HEK293 (cell line): ENCODE measurements at regions of chr17 and their contacts with region 1.

Region 1: DNA sequence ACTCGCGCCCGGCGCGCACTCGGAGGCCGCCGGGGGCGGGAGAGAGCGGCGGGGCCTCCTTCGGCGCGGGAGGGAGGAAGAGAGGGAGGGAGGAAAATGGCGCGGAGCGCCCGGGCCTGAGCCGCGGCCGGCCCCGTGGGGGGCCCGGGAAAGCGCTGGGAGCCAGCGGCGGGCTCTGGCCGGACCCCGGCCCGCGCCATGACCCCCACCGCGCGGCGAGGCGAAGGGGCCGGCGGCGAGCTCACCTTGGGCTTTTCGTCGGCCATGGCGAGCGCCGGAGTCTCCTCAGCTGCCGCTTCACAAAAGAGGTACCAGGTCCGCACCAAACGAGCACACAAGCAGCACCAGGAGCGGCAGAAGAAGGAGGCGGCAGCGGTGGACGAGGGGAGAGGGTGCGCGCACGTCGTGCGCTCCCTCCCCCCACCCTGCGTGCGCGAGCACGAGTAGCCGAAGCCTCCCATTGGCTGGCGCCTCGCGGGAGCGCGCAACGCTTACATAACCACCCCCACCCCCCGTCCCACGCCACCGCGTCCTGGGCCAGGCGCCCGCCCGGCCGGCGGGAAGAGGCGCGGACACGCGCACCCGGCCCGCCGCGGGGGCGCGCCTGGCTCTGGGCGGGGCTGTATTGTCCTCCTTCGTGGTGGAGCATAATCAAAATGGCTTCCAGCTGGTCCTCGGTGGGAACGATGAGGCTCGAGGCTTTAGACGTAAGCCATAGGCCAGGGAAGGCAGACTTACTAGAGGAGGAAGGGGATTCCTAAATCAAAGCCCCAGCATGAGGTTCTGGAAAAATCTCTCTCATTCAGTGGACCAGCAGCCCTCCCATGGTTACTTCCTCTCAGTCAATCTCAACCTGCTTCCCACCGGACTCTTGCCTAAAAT is at the start of gene SUMO2:
- H3K4me3 ChIP-seq: peak within 1 kb of the TSS; percentile 56
- H3K27ac ChIP-seq: peak within 1 kb of the TSS; percentile 95
- H3K4me1 ChIP-seq: peaks cover 5% of the 10 kb centered on the region; the same call in 1 of the 2 replicates
- CTCF ChIP-seq: no peak

Region 2: DNA sequence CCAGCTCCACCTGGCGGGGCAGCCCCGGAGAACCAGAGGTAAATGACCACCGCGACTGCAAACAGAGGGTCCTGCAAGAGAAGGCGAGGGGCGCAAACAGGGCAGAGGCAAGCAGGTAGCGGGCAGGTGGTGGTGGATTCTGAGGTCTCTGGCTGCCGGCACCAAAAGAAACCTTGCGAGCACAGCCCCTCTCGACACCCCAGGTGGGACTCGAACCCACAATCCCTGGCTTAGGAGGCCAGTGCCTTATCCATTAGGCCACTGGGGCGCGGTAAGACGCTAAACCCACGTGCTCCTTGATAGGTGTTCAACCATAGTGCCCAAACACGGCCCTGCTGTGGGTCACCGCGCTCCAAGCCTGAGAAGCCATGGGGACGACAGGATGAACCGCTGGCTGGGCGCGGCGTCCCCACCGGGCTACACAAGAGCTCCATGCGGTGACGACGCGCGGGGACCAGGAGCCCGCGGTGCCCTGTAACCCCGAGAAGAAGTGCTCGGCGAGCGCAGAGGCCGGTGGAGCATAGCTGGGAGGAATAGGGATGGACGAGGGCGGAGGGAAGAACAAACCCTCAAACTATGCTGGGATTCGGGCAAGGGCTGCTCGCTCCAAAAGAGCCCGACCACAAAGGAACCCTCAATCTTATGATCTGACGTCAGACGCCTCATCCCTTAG is 148.4 kb before region 1 on chr17:
- CTCF ChIA-PET with region 1: no interaction called
- POLR2A ChIA-PET with region 1: no interaction called
- H3K4me3 ChIP-seq: peak overlapping the region; percentile 60
- H3K27ac ChIP-seq: peak overlapping the region; percentile 94
- H3K4me1 ChIP-seq: peaks cover 19% of the 10 kb centered on the region
- CTCF ChIP-seq: peak; percentile 51

Region 3: GRCh38 chr17:75154195-75155106 is 28.4 kb before region 1 on chr17 and contains the start of gene JPT1:
- CTCF ChIA-PET with region 1: interaction called, 4 read pairs
- POLR2A ChIA-PET with region 1: interaction called, 14 read pairs
- H3K4me3 ChIP-seq: peak within 1 kb of the TSS; percentile 90
- H3K27ac ChIP-seq: peak within 1 kb of the TSS; percentile 92
- H3K4me1 ChIP-seq: peaks cover 9% of the 10 kb centered on the region; the same call in 1 of the 2 replicates
- CTCF ChIP-seq: peak; percentile 11; the same call in 1 of the 2 replicates

Region 4: DNA sequence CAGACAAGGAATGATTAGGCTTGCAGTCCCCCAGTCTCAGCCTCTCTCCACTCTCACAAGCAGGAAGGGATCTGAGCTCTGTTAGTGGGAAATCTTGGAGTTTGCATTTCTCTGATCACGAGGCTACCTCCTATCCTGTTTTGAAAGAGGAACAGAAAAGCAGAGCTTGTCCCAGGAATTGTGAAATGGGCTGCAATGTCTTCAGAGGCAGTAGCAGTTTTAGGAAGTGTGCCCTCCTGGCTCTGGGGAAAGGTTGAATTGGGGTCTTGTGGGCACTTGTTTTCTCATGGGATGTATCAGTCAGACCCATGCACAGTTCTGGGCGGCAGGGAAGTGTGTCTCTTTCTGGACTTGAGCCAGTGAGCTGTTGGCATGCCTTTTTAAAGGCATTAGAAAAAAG is 45.5 kb after region 1 on chr17:
- CTCF ChIA-PET with region 1: no interaction called
- POLR2A ChIA-PET with region 1: no interaction called
- H3K4me3 ChIP-seq: no peak overlapping the region
- H3K27ac ChIP-seq: no peak overlapping the region
- H3K4me1 ChIP-seq: no peaks in the 10 kb centered on the region
- CTCF ChIP-seq: no peak

Region 5: DNA sequence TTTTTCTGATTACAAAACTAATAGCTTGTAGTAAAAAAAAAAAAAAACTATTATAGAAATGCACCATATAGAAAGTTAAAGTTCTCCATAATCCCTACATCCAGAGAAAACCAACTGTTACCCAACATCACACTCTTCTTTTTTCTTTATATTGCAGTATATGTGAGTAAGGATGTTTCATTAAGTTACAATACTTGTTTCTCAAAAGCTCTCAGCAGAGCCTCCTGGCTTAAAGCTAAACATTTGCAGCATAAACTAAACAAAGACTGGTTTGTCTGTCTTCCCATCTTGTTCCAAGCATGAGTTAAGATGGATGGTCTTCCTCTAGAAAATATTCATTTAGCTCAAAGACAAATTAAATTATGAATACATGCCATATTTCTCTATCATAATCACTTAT is 197.5 kb after region 1 on chr17:
- CTCF ChIA-PET with region 1: no interaction called
- POLR2A ChIA-PET with region 1: no interaction called
- H3K4me3 ChIP-seq: no peak overlapping the region
- H3K27ac ChIP-seq: no peak overlapping the region
- H3K4me1 ChIP-seq: peaks cover 7% of the 10 kb centered on the region
- CTCF ChIP-seq: no peak